Brain microvascular endothelial cell (primary cell): ENCODE measurements at regions of chr1 and their contacts with region 1.

Region 1: GRCh38 chr1:214362188-214362882 is 81.4 kb downstream of the SMYD2 start:
- DNase-seq: peak; percentile 57
- H3K4me3 ChIP-seq: no peak overlapping the region
- H3K27ac ChIP-seq: peak overlapping the region; percentile 50
- H3K27me3 ChIP-seq: no peaks in the 10 kb centered on the region
- CTCF ChIP-seq: no peak

Region 2: GRCh38 chr1:214584805-214585766 is 222.8 kb after region 1 on chr1:
- in situ Hi-C with region 1: loop called (anchors 10 kb)
- DNase-seq: no peak
- H3K4me3 ChIP-seq: no peak overlapping the region
- H3K27ac ChIP-seq: no peak overlapping the region
- H3K27me3 ChIP-seq: no peaks in the 10 kb centered on the region
- CTCF ChIP-seq: peak; percentile 64